ENCODE measurements at regions of chr6 and their contacts with region 1.

Region 1: GRCh38 chr6:36094753-36095496 is 35.4 kb upstream of the MAPK13 start:
- DNase-seq: peak; percentile 10
- H3K4me3 ChIP-seq: no peak overlapping the region
- CTCF ChIP-seq: peak; percentile 94

Region 2: DNA sequence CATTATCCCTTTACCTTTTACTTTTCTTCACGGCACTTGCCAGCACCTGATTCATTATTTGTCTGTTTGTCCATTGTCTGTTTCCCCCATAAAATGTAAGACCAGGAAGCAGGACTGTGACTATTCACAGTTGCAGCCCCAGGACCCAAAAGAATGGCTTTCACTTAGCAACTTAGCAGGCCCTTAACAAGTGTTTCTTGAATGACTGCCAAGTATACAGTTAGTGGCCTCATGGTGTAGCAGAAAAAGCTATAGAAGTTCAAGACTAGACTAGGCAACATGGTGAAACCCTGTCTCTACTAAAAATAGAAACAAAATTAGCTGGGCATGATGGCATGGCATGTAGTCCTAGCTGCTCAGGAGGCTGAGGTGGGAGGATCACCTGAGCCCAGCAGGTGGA is 74.8 kb before region 1 on chr6:
- CTCF ChIA-PET with region 1: interaction called, 210 read pairs
- POLR2A ChIA-PET with region 1: no interaction called
- DNase-seq: no peak
- H3K4me3 ChIP-seq: no peak overlapping the region
- CTCF ChIP-seq: no peak

Region 3: GRCh38 chr6:36033935-36034334 is 61.0 kb before region 1 on chr6:
- CTCF ChIA-PET with region 1: interaction called, 210 read pairs
- POLR2A ChIA-PET with region 1: no interaction called
- DNase-seq: no peak
- H3K4me3 ChIP-seq: no peak overlapping the region
- CTCF ChIP-seq: no peak

Region 4: DNA sequence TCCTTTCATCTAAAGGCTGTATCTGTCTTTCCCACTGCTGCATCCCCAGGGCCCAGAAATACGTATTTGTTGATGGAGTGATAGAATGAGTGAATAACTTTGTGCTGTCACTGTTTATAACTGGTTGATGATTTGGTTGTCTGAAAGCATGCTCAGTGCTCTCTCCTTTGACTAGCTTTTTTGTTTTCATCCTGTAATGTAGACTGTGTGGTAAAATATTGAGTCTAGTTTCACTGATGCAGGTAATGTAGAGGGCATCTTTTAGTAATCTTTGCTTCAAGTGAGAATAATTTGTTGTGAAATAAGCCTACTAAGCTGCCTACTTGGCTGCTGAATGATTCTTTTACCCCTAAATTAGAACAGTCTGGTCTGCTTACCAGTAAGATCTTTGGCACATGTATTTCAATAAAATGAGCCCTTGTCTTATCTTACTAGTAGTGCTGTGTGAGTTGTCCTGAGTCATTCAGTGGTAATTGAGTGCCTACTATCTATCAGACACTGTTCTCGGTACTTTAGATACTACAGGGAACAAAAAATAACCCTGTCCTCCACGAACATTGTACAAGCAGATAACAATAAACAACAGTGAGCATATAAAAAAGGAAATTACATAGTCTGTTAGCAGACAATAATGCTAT is 27.4 kb before region 1 on chr6:
- CTCF ChIA-PET with region 1: interaction called, 92 read pairs
- POLR2A ChIA-PET with region 1: no interaction called
- DNase-seq: no peak
- H3K4me3 ChIP-seq: no peak overlapping the region
- CTCF ChIP-seq: no peak

Region 5: GRCh38 chr6:36083446-36083845 is 11.5 kb before region 1 on chr6:
- CTCF ChIA-PET with region 1: interaction called, 84 read pairs
- POLR2A ChIA-PET with region 1: no interaction called
- DNase-seq: no peak
- H3K4me3 ChIP-seq: no peak overlapping the region
- CTCF ChIP-seq: no peak

Region 6: DNA sequence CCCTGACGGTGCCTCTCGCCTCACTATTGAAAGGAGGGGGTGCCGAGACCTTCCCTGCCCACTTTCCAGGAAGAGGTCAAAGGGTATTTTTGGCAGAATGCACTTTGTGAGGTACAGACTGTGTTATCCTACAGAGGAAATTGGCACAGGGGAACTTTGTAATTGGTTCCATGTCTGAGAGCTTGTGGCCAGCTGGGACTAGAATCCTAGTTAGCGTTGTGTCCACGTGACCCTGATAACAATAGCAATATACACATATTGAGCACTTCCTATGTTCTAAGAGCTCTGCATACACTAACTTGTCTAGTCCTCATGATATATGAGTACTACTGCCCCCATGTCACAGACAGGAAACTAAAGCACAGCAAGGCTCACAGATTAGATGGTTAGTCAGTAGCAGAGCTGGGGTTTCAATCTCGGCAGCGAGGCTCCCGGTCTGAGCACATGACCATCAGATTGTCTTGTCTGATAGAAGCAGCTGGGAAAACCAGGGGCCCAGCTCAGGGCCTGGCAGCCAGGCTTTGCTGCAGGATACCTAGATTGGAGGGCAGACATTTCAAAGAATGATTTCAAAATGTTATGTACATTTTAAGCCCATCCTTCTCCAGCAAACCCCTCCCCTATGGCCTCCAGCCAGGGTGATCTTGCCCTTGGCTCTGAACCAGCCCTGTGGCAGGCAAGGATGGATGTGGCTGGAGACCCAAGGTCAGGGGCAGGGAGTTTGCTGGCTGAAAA is 36.8 kb after region 1 on chr6:
- CTCF ChIA-PET with region 1: interaction called, 22 read pairs
- POLR2A ChIA-PET with region 1: no interaction called
- DNase-seq: no peak
- H3K4me3 ChIP-seq: no peak overlapping the region
- CTCF ChIP-seq: no peak

Region 7: DNA sequence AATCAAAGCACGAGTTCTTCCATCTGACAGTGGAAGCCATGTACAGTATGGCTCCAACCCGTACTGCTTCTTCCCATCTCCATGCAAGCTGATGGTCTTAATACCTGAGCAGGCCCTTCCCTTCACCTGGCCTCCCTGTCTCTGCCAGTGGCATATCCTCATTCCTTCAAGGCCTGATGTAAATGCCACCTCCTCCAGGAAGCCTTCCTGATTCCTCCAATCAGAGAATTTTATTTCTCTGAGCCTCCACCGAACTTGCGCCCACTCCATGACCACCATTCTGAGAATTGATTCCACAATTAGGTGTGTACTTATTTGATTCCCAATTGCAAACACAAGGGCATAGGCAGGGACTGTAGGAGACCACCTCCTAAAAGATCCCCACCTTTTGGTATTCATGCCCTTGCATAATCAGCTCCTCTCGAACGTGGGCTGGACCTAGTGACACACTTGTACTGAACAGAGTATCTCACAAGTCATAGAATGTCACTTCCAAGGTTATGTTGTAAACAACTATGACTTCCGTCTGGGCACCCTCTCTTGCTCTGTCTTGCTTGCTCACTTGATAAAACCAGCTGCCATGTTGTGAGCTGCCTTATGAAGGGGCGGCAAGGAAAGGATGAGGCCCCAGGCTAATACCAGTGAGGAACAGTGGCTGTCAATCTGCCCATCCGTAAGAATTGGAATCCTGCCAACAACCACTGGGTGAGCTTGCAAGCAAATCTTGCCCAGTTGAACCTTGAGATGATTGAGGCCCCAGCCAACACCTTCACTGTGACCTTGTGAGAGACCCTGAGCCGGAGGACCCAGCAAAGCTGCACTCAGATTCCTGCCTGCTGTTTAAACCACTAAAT is 705.5 kb after region 1 on chr6:
- CTCF ChIA-PET with region 1: no interaction called
- POLR2A ChIA-PET with region 1: no interaction called
- DNase-seq: no peak
- H3K4me3 ChIP-seq: no peak overlapping the region
- CTCF ChIP-seq: no peak

Measured in AG04449 (cell line).